Activated naive CD4-positive, alpha-beta T cell treated with anti-CD3 and anti-CD28 coated beads for 36 hours (primary cell): ENCODE measurements at regions of chr3 and their contacts with region 1.

Region 1: GRCh38 chr3:48439820-48440589 is at the starts of genes CCDC51 and TMA7:
- DNase-seq: peak; percentile 100
- H3K4me3 Mint-ChIP-seq: peak within 1 kb of the TSS; percentile 93
- H3K27ac Mint-ChIP-seq: peak within 1 kb of the TSS; percentile 96
- H3K4me1 Mint-ChIP-seq: peaks cover 44% of the 10 kb centered on the region
- H3K27me3 Mint-ChIP-seq: no peaks in the 10 kb centered on the region
- total RNA-seq, gene CCDC51: 16.4 to 17.4 TPM
- total RNA-seq, gene TMA7: 319 to 353 TPM

Region 2: GRCh38 chr3:48232734-48233133 is 207.3 kb before region 1 on chr3:
- CTCF ChIA-PET with region 1: interaction called, 34 read pairs
- intact Hi-C with region 1: loop called (anchors 1 kb)
- DNase-seq: peak; percentile 74
- H3K4me3 Mint-ChIP-seq: no peak overlapping the region
- H3K27ac Mint-ChIP-seq: no peak overlapping the region
- H3K4me1 Mint-ChIP-seq: no peaks in the 10 kb centered on the region
- H3K27me3 Mint-ChIP-seq: no peaks in the 10 kb centered on the region

Region 3: DNA sequence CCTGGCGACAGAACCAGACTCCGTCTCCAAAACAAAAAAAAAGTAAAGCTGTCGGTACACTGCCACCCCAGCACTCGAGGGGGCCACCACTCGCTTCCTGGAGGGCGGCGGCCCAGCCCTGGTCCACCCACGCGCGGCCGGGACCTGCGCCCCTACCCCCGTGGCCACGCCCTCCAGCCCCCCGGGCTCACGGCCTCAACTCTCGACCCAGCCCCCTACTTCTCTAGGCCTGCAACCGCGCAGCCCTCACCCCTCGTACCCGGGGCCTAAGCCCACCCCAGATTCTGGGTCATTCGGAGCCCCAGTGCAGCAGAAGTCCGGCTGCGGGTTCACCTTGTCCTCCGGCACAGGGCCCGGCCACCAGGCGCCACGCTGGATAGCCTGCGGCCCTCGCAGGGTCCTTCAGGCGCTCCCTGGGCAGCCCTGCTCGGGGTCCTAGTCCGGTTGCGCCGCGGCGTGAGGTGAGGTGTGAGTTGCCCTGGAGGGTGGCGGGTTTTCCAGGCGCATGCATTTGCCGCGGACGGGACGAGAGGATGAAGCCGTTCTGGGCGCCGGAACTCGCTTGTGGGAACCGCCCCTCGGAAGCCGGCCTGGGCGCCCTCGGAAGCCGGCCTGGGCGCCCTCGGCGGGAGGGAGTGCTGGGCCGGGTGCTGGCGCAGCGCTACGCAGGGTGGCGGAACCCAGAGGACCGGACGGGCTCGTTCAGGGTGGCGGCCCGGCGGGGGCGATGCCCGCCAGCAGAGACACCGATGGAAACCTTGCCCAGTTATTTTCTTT is 138.8 kb before region 1 on chr3:
- CTCF ChIA-PET with region 1: interaction called, 5 read pairs
- intact Hi-C with region 1: loop called (anchors 1 kb)
- DNase-seq: peak; percentile 94
- H3K4me3 Mint-ChIP-seq: peak within 1 kb of the TSS; percentile 94
- H3K27ac Mint-ChIP-seq: peak within 1 kb of the TSS; percentile 96
- H3K4me1 Mint-ChIP-seq: peaks cover 28% of the 10 kb centered on the region
- H3K27me3 Mint-ChIP-seq: no peaks in the 10 kb centered on the region

Region 4: GRCh38 chr3:48400824-48401433 is 39.1 kb before region 1 on chr3:
- CTCF ChIA-PET with region 1: interaction called, 162 read pairs
- intact Hi-C with region 1: loop called (anchors 1 kb)
- DNase-seq: peak; percentile 77
- H3K4me3 Mint-ChIP-seq: no peak overlapping the region
- H3K27ac Mint-ChIP-seq: no peak overlapping the region
- H3K4me1 Mint-ChIP-seq: no peaks in the 10 kb centered on the region
- H3K27me3 Mint-ChIP-seq: peaks cover under 1% of the 10 kb centered on the region

Region 5: DNA sequence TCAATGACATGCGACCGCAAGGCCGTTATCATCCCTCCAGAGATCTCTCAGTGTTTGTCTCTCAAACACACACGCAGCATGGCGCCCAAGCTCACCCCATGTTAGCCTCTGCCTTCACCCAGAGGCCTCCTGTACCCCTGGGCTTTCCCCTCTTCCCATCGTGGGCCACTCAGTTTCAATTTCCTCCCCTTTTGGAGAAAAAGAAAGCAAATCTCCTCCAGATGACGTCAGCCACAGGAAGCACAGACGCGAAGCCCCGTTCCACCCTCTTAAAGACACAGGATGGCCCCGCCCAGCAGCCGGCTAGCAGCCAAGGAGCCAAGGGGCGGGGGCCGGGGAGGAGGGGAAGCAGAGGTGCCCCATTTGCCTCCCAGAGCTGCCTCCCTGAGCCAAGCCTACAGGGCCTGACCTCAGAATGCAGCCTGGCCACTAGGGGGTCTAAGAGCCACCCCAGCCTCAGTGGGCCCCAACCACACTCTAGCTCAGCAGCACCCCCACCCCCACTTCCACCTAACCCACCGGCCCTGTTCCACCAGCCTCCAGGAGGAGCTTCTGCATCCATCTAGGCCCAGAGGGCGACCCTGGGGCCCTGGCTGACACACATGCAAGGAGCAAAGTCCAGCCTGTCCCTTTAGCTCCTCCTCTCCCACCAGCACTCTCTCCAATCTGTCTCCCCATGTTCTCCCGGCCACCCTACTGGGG is 33.1 kb after region 1 on chr3:
- CTCF ChIA-PET with region 1: interaction called, 28 read pairs
- intact Hi-C with region 1: loop called (anchors 2 kb)
- DNase-seq: peak; percentile 99
- H3K4me3 Mint-ChIP-seq: peak overlapping the region; percentile 78
- H3K27ac Mint-ChIP-seq: peak overlapping the region; percentile 97
- H3K4me1 Mint-ChIP-seq: peaks cover 55% of the 10 kb centered on the region
- H3K27me3 Mint-ChIP-seq: no peaks in the 10 kb centered on the region

Region 6: GRCh38 chr3:48635222-48636021 is 195.4 kb after region 1 on chr3 and contains the start of gene SLC26A6:
- CTCF ChIA-PET with region 1: interaction called, 8 read pairs
- intact Hi-C with region 1: loop called (anchors 10 kb)
- DNase-seq: peak; percentile 97
- H3K4me3 Mint-ChIP-seq: peak within 1 kb of the TSS; percentile 89
- H3K27ac Mint-ChIP-seq: peak within 1 kb of the TSS; percentile 69
- H3K4me1 Mint-ChIP-seq: peaks cover 18% of the 10 kb centered on the region
- H3K27me3 Mint-ChIP-seq: no peaks in the 10 kb centered on the region
- total RNA-seq, gene SLC26A6: 24.3 to 24.7 TPM